Activated T-helper 1 cell treated with anti-CD3 and anti-CD28 coated beads, Interleukin-12 subunit alpha, Interleukin-12 subunit beta, Interleukin-2, Interleukin-4 antibody, amounts not matched to agents 30 ng/mL and 10 ng/mL and 1 ng/mL, durations not matched to agents 14 hours and 24 hours and 36 hours (primary cell): ENCODE measurements at regions of chr21 and their contacts with region 1.

Region 1: DNA sequence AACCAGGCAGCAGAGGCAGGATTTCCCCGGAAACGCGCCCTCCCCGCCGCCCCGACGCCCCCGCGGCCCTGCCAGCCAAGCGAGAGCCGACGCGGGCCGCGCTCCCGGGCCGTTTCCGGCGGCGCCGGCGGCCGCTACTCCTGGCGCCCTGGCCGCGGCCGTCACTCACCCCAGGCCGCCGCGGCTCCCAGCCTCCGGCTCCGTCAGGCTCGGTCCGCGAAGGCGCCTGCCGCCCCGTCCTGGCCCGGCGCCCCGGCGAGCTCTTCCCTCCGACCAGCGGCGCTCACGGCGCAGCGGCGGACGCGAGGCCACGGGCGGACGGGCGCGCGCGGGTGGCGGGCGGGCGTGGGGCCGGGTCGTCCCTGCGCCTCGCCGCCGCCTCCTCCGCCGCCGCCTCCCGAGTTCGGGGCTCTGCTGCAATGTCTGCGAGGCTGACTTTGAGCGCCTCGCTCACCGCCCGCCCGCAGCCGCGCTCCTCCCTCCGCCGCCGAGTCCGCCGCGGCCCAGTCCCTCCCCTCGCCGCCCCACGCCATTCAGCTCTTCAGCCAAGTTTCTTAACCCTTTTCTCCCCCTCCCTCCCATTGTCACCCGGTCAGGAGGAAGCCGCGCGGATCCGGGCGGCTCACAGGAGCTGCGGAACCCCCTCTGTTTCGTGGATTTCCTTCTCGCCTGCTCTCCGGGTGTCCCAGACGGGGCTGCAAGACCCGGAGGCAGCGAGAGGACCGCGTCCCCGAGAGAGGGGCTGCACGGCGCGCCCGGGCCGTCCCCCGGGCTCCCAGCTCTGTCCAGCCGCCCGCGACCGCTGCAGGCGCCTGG is at the start of gene NRIP1:
- DNase-seq: peak; percentile 80
- H3K4me3 Mint-ChIP-seq: peak within 1 kb of the TSS; percentile 93
- H3K27ac Mint-ChIP-seq: peak within 1 kb of the TSS; percentile 88
- H3K4me1 Mint-ChIP-seq: peaks cover 52% of the 10 kb centered on the region
- H3K27me3 Mint-ChIP-seq: peaks cover 25% of the 10 kb centered on the region
- total RNA-seq, gene NRIP1: 11.4 and 11.7 TPM in 2 replicates

Region 2: GRCh38 chr21:14215971-14216641 is 848.7 kb before region 1 on chr21 and contains the start of gene RBM11:
- intact Hi-C with region 1: loop called (anchors 5 kb)
- DNase-seq: peak; percentile 59
- H3K4me3 Mint-ChIP-seq: peak within 1 kb of the TSS; percentile 83
- H3K27ac Mint-ChIP-seq: no peak within 1 kb of the TSS
- H3K4me1 Mint-ChIP-seq: peaks cover 5% of the 10 kb centered on the region
- H3K27me3 Mint-ChIP-seq: peaks cover 20% of the 10 kb centered on the region
- total RNA-seq, gene RBM11: 0.66 and 0.86 TPM in 2 replicates

Region 3: DNA sequence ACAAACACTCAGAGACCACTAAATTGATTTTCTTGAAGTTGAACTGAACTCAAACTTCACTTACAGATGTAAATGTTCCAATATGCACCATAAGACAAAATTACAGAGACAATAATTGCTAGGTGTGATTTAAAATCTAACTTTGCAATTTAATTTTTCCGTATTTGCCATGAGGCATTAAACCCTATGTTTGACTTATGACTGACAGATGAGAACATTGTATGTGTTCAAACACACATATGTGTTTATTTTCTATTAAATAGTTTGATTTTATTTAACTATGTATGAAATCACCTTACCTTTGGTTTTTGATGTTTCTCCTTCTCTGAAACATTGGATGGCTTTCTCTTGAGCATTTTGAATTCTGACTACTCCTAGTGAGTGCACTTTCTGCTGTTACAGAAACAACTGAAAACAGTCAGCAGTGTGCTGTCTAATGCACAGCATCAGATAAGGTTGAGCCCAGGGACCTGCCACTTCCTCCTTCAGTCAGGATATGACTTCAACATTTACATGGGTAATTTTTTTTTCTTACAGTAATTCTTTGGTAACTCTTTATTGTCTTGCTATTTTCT is 518.8 kb before region 1 on chr21 and contains the start of gene SAMSN1:
- intact Hi-C with region 1: loop called (anchors 5 kb)
- DNase-seq: peak; percentile 73
- H3K4me3 Mint-ChIP-seq: peak within 1 kb of the TSS; percentile 98
- H3K27ac Mint-ChIP-seq: peak within 1 kb of the TSS; percentile 92
- H3K4me1 Mint-ChIP-seq: peaks cover 81% of the 10 kb centered on the region
- H3K27me3 Mint-ChIP-seq: no peaks in the 10 kb centered on the region
- total RNA-seq, gene SAMSN1: 115 and 119 TPM in 2 replicates

Region 4: GRCh38 chr21:14956807-14957206 is 108.0 kb before region 1 on chr21:
- intact Hi-C with region 1: no loop called
- DNase-seq: no peak
- H3K4me3 Mint-ChIP-seq: no peak overlapping the region
- H3K27ac Mint-ChIP-seq: no peak overlapping the region
- H3K4me1 Mint-ChIP-seq: no peaks in the 10 kb centered on the region
- H3K27me3 Mint-ChIP-seq: peaks cover 2% of the 10 kb centered on the region

Region 5: DNA sequence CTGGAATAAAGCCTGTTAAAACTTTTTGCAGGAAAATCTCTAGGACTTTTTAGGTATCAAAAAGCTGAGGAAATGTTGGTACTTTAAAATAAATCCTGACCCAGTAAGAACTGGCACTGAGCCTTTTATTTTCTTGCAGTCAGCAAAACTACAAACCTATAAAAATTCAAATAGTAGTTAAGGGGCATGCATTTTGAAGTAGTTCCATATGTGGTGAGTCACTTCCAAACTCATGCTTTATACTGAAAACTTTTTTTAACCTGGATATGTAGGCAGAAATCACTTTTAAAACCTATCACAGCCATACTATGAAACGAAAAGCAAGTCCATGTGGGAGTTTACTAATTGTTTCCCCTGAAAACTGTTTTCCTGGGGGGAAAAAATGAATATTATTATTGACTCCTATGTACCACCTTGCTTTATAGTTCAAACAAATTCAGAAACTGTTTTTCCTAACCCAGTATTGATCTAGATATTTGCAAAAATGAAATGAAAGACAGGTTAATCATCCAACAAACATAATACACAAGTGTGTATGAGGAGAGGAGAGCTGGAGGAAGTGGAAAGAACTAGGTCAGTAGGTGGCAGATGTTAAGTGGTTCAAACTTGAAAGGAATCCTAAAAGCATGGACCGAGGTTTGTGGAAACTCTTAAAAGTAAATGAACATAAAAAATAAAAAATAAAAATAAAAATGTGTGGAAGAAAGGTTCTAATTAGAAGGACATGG is 30.5 kb before region 1 on chr21:
- intact Hi-C with region 1: loop called (anchors 1 kb)
- DNase-seq: no peak
- H3K4me3 Mint-ChIP-seq: no peak overlapping the region
- H3K27ac Mint-ChIP-seq: peak overlapping the region; percentile 63
- H3K4me1 Mint-ChIP-seq: peaks cover 20% of the 10 kb centered on the region
- H3K27me3 Mint-ChIP-seq: no peaks in the 10 kb centered on the region

Region 6: GRCh38 chr21:15483138-15483780 is 418.5 kb after region 1 on chr21:
- intact Hi-C with region 1: loop called (anchors 1 kb)
- DNase-seq: peak; percentile 57
- H3K4me3 Mint-ChIP-seq: no peak overlapping the region
- H3K27ac Mint-ChIP-seq: no peak overlapping the region
- H3K4me1 Mint-ChIP-seq: peaks cover 19% of the 10 kb centered on the region
- H3K27me3 Mint-ChIP-seq: peaks cover 4% of the 10 kb centered on the region

Region 7: GRCh38 chr21:15729674-15730483 is 665.1 kb after region 1 on chr21 and contains the start of gene USP25:
- intact Hi-C with region 1: loop called (anchors 2 kb)
- DNase-seq: peak; percentile 80
- H3K4me3 Mint-ChIP-seq: peak within 1 kb of the TSS; percentile 93
- H3K27ac Mint-ChIP-seq: peak within 1 kb of the TSS; percentile 91
- H3K4me1 Mint-ChIP-seq: peaks cover 40% of the 10 kb centered on the region
- H3K27me3 Mint-ChIP-seq: peaks cover 31% of the 10 kb centered on the region
- total RNA-seq, gene USP25: 25.6 and 26.8 TPM in 2 replicates